Ovary (tissue), 10 donors: ENCODE measurements at regions of chr7 and their contacts with region 1.

Region 1: GRCh38 chr7:518630-519483 is 789 bp downstream of the PDGFA start:
- DNase-seq: peak; percentile 49 to 74 (median 67)
- H3K4me3 ChIP-seq: peak overlapping the region; percentile 46
- H3K27ac ChIP-seq: peak overlapping the region in 1 of 2 donors; percentile 52
- H3K4me1 ChIP-seq: peaks cover 15% of the 10 kb centered on the region
- H3K27me3 ChIP-seq: peaks cover 7% of the 10 kb centered on the region
- CTCF ChIP-seq: no peak
- EP300 ChIP-seq: no peak
- POLR2A ChIP-seq: no peak

Region 2: DNA sequence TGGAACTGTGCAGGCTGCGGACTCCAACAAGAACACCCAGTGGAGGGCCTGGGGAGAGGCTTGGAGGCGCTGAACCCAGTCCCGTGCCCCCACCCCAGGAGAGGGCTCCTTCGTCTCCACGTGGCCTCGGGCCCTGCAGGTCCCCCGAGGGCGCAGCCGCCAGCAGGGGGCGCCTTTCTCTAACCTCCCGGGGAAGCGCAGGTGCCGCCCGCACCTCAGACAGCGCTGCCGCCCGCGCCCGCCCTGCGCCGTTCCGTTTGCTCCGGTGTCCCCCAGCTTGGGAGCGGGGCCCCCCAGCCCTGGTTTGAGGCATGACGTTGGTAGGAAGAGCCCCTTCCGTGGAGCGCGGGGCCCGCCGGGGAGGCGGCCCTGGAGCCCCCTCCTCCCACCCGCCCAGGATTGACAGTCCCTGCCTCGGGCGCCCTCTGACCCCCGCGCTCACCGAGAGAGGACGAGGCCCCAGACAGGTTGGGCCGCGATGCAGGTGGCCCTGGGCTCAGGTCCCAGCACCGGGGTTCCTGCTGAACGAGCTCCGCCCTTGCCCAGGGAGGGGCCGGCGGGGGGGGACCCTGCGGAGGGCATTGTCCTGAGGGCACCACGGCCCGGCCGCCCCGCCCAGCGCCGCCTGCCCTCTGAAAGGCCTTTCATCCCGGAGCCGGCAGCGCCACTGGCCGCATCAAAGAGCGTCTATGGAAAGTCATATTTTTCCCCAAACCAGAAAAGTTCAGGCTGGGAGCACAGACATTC is 186.0 kb before region 1 on chr7:
- intact Hi-C with region 1: loop called in 1 of 4 experiments (anchors 5 kb)
- DNase-seq: peak; percentile 58 to 84 (median 75)
- H3K4me3 ChIP-seq: peak overlapping the region; percentile 24
- H3K27ac ChIP-seq: no peak overlapping the region
- H3K4me1 ChIP-seq: peaks cover 7% of the 10 kb centered on the region
- H3K27me3 ChIP-seq: no peaks in the 10 kb centered on the region
- CTCF ChIP-seq: peak; percentile 48 to 60 (median 55)
- EP300 ChIP-seq: no peak
- POLR2A ChIP-seq: no peak

Region 3: GRCh38 chr7:668139-668931 is 149.5 kb after region 1 on chr7:
- intact Hi-C with region 1: loop called in 1 of 4 experiments (anchors 5 kb)
- DNase-seq: peak; percentile 53 to 79 (median 72)
- H3K4me3 ChIP-seq: no peak overlapping the region
- H3K27ac ChIP-seq: peak overlapping the region in 1 of 2 donors; percentile 63
- H3K4me1 ChIP-seq: peaks cover 35% of the 10 kb centered on the region
- H3K27me3 ChIP-seq: no peaks in the 10 kb centered on the region
- CTCF ChIP-seq: no peak
- EP300 ChIP-seq: no peak
- POLR2A ChIP-seq: no peak

Region 4: GRCh38 chr7:774161-775109 is 255.6 kb after region 1 on chr7:
- intact Hi-C with region 1: loop called in 2 of 4 experiments (anchors 5 to 10 kb)
- DNase-seq: peak in 4 of 5 donors; percentile 56 to 83 (median 72)
- H3K4me3 ChIP-seq: no peak overlapping the region
- H3K27ac ChIP-seq: no peak overlapping the region
- H3K4me1 ChIP-seq: peaks cover 18% of the 10 kb centered on the region
- H3K27me3 ChIP-seq: no peaks in the 10 kb centered on the region
- CTCF ChIP-seq: peak; percentile 81 to 87 (median 87)
- EP300 ChIP-seq: no peak
- POLR2A ChIP-seq: no peak